ENCODE measurements at regions of chr4 and their contacts with region 1.

Region 1: GRCh38 chr4:10773010-10773409 is 88.4 kb upstream of the CLNK start:
- DNase-seq: no peak
- CTCF ChIP-seq: no peak

Region 2: GRCh38 chr4:10688022-10688421 is 85.0 kb before region 1 on chr4:
- CTCF ChIA-PET with region 1: no interaction called
- POLR2A ChIA-PET with region 1: no interaction called
- DNase-seq: no peak
- CTCF ChIP-seq: no peak

Region 3: GRCh38 chr4:10783351-10783750 is 10.3 kb after region 1 on chr4:
- CTCF ChIA-PET with region 1: interaction called, 13 read pairs
- POLR2A ChIA-PET with region 1: no interaction called
- DNase-seq: no peak
- CTCF ChIP-seq: no peak

Measured in GM10248 (cell line).